ENCODE measurements at regions of chr6 and their contacts with region 1.

Region 1: DNA sequence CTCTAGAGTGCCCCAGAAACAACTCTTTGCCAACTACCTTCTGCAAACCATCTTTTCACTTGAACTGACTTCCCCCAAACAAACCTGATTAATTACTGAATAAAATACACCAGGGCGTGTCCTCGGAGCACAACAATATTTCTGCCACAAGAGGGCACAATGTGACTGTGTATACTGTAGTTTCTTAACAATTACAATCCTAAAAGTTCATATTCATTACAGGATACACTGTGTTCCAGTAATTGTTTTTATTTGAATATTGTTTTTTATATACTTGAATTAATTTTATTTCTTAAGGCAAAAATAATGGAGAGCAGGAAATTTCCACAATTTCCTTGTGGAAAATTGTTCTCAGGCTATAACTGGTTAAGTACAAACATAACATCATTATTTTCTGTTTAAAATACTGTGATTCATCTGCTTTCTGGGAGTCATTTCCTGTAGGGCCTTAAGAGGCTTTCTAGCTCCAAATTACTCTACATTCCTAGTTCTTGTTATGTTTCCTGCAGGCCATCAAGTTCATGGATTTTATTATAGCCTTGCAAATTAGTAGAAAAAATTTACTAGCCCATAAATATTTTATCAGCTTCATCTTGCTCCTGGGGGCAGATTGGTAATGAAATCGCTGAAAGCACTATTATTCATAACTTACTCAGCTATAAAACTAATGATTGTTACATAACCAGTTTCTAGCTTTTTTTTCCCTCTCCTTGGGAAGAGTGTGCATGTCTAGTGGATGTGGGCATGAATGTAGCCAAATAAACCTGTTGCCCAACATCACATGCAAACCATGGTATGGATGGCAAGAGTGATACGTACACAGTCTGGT is 51.9 kb upstream of the SLC22A16 start:
- DNase-seq: peak; percentile 56
- ATAC-seq: peak; percentile 82
- H3K4me3 ChIP-seq: no peak overlapping the region
- H3K27ac ChIP-seq: no peak overlapping the region
- H3K4me1 ChIP-seq: peaks cover 0 to 28% of the 10 kb centered on the region in 2 experiments; a peak in 2 of 4 replicates
- H3K27me3 ChIP-seq: no peaks in the 10 kb centered on the region
- CTCF ChIP-seq: peak; percentile 62 to 87 (median 76)
- POLR2A ChIP-seq: no peak
- RAD21 ChIP-seq: peak; percentile 95

Region 2: GRCh38 chr6:110512979-110513378 is 15.3 kb before region 1 on chr6:
- CTCF ChIA-PET with region 1: no interaction called
- POLR2A ChIA-PET with region 1: no interaction called
- RAD21 ChIA-PET with region 1: no interaction called
- intact Hi-C with region 1: no loop called
- DNase-seq: no peak
- ATAC-seq: no peak
- H3K4me3 ChIP-seq: no peak overlapping the region
- H3K27ac ChIP-seq: no peak overlapping the region
- H3K4me1 ChIP-seq: peaks cover 21 to 29% of the 10 kb centered on the region in 2 experiments
- H3K27me3 ChIP-seq: no peaks in the 10 kb centered on the region
- CTCF ChIP-seq: no peak
- POLR2A ChIP-seq: no peak
- RAD21 ChIP-seq: no peak

Region 3: DNA sequence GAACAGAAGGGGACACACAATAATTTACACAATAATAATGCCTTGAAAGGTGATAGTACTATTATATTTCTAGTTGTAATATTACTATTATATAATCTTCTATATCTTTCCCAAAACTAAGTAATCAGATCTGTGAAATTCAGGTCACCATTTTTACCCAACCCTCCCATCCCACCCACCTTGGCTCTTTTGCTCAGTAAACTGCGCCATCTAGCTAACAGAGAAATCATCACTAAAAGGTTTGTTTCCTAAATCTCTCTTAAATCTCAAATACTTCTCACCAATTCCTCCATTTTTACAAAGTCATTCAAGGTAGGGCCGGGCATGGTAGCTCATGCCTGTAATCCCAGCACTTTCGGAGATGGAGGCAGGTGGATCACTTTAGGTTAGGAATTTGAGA is 203.6 kb after region 1 on chr6:
- CTCF ChIA-PET with region 1: interaction called, 10 read pairs
- POLR2A ChIA-PET with region 1: no interaction called
- RAD21 ChIA-PET with region 1: no interaction called
- intact Hi-C with region 1: no loop called
- DNase-seq: no peak
- ATAC-seq: no peak
- H3K4me3 ChIP-seq: no peak overlapping the region
- H3K27ac ChIP-seq: no peak overlapping the region
- H3K4me1 ChIP-seq: no peaks in the 10 kb centered on the region
- H3K27me3 ChIP-seq: no peaks in the 10 kb centered on the region
- CTCF ChIP-seq: 0 out of 6 replicates have a peak, but pooled peaks of 1 of the 3 experiments have one; percentile 20
- POLR2A ChIP-seq: no peak
- RAD21 ChIP-seq: peak; percentile 52

Region 4: DNA sequence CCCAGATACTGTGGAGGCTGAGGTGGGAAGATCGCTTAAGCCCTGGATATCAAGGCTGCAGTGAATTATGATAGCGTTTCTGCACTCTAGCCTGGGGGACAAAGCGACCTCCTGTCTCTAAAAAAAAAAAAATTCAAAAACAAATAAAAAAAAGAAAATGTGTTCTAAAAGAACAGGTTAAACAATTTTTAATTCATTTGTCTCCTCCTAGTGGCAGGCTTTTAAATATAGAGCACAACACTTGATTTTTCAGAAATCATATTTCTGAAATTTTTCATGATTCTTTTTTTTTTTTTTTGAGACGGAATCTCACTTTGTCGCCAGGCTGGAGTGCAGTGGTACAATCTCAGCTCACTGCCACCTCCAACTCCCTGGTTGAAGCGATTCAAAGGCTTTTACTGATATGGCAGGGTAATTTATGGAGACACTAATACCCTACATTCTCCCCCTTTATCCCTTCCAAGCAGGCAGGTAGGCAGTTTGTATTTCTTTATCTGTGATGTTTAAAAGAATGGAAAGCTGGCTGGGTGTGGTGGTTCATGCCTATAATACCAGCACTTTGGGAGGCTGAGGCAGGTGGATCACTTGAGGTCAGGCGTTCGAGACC is 421.5 kb after region 1 on chr6:
- CTCF ChIA-PET with region 1: interaction called, 4 read pairs
- POLR2A ChIA-PET with region 1: no interaction called
- RAD21 ChIA-PET with region 1: no interaction called
- intact Hi-C with region 1: loop called (anchors 1 kb)
- DNase-seq: peak; percentile 12
- ATAC-seq: peak; percentile 45; the same call in 1 of the 2 replicates
- H3K4me3 ChIP-seq: no peak overlapping the region
- H3K27ac ChIP-seq: no peak overlapping the region
- H3K4me1 ChIP-seq: peaks cover 4 to 10% of the 10 kb centered on the region in 2 experiments
- H3K27me3 ChIP-seq: no peaks in the 10 kb centered on the region
- CTCF ChIP-seq: peak in 2 of 3 experiments; percentile 58 to 77; a peak in 5 of 6 replicates
- POLR2A ChIP-seq: no peak
- RAD21 ChIP-seq: peak; percentile 81

Region 5: GRCh38 chr6:111210194-111210728 is 681.9 kb after region 1 on chr6:
- CTCF ChIA-PET with region 1: no interaction called
- POLR2A ChIA-PET with region 1: no interaction called
- RAD21 ChIA-PET with region 1: no interaction called
- intact Hi-C with region 1: loop called (anchors 1 kb)
- DNase-seq: peak; percentile 45
- ATAC-seq: peak; percentile 85
- H3K4me3 ChIP-seq: no peak overlapping the region
- H3K27ac ChIP-seq: no peak overlapping the region
- H3K4me1 ChIP-seq: no peaks in the 10 kb centered on the region
- H3K27me3 ChIP-seq: no peaks in the 10 kb centered on the region
- CTCF ChIP-seq: peak; percentile 62 to 78 (median 75); a peak in 5 of 6 replicates
- POLR2A ChIP-seq: no peak
- RAD21 ChIP-seq: peak; percentile 86